Endothelial cell of umbilical vein (primary cell): ENCODE measurements at regions of chr15 and their contacts with region 1.

Region 1: GRCh38 chr15:52256366-52256765 is 39.2 kb downstream of the MYO5C start:
- DNase-seq: peak; percentile 90
- H3K4me3 ChIP-seq: no peak overlapping the region
- H3K27ac ChIP-seq: no peak overlapping the region
- H3K4me1 ChIP-seq: peaks cover 33% of the 10 kb centered on the region
- H3K27me3 ChIP-seq: no peaks in the 10 kb centered on the region
- CTCF ChIP-seq: peak; percentile 69
- POLR2A ChIP-seq: no peak

Region 2: GRCh38 chr15:52071546-52071945 is 184.8 kb before region 1 on chr15:
- CTCF ChIA-PET with region 1: no interaction called
- POLR2A ChIA-PET with region 1: no interaction called
- dilution Hi-C with region 1: no loop called
- intact Hi-C with region 1: no loop called
- DNase-seq: no peak
- H3K4me3 ChIP-seq: no peak overlapping the region
- H3K27ac ChIP-seq: no peak overlapping the region
- H3K4me1 ChIP-seq: peaks cover under 1% of the 10 kb centered on the region
- H3K27me3 ChIP-seq: no peaks in the 10 kb centered on the region
- CTCF ChIP-seq: no peak
- POLR2A ChIP-seq: no peak

Region 3: GRCh38 chr15:52417521-52417920 is 161.2 kb after region 1 on chr15:
- CTCF ChIA-PET with region 1: no interaction called
- POLR2A ChIA-PET with region 1: no interaction called
- dilution Hi-C with region 1: no loop called
- intact Hi-C with region 1: loop called (anchors 5 kb)
- DNase-seq: peak; percentile 90
- H3K4me3 ChIP-seq: peak overlapping the region in 2 of 3 experiments; percentile 24 to 59
- H3K27ac ChIP-seq: peak overlapping the region; percentile 97
- H3K4me1 ChIP-seq: peaks cover 67% of the 10 kb centered on the region
- H3K27me3 ChIP-seq: no peaks in the 10 kb centered on the region
- CTCF ChIP-seq: no peak
- POLR2A ChIP-seq: peak; percentile 38

Region 4: GRCh38 chr15:52496776-52497470 is 240.6 kb after region 1 on chr15:
- CTCF ChIA-PET with region 1: no interaction called
- POLR2A ChIA-PET with region 1: no interaction called
- dilution Hi-C with region 1: no loop called
- intact Hi-C with region 1: loop called (anchors 10 kb)
- DNase-seq: peak; percentile 62
- H3K4me3 ChIP-seq: no peak overlapping the region
- H3K27ac ChIP-seq: peak overlapping the region; percentile 27
- H3K4me1 ChIP-seq: peaks cover 59% of the 10 kb centered on the region
- H3K27me3 ChIP-seq: no peaks in the 10 kb centered on the region
- CTCF ChIP-seq: no peak
- POLR2A ChIP-seq: no peak

Region 5: GRCh38 chr15:52568601-52569256 is 312.4 kb after region 1 on chr15 and contains the start of gene ARPP19:
- CTCF ChIA-PET with region 1: interaction called, 3 read pairs
- POLR2A ChIA-PET with region 1: no interaction called
- dilution Hi-C with region 1: no loop called
- intact Hi-C with region 1: loop called (anchors 1 kb)
- DNase-seq: peak; percentile 86
- H3K4me3 ChIP-seq: peak within 1 kb of the TSS; percentile 45 to 79 (median 75)
- H3K27ac ChIP-seq: peak within 1 kb of the TSS; percentile 80
- H3K4me1 ChIP-seq: peaks cover 24% of the 10 kb centered on the region
- H3K27me3 ChIP-seq: no peaks in the 10 kb centered on the region
- CTCF ChIP-seq: no peak
- POLR2A ChIP-seq: peak; percentile 88
- total RNA-seq, gene ARPP19: 176 and 191 TPM in 2 replicates

Region 6: GRCh38 chr15:52730173-52730572 is 473.8 kb after region 1 on chr15:
- CTCF ChIA-PET with region 1: interaction called, 133 read pairs
- POLR2A ChIA-PET with region 1: no interaction called
- dilution Hi-C with region 1: no loop called
- intact Hi-C with region 1: loop called (anchors 1 kb)
- DNase-seq: peak; percentile 92
- H3K4me3 ChIP-seq: no peak overlapping the region
- H3K27ac ChIP-seq: peak overlapping the region; percentile 73
- H3K4me1 ChIP-seq: peaks cover 38% of the 10 kb centered on the region
- H3K27me3 ChIP-seq: no peaks in the 10 kb centered on the region
- CTCF ChIP-seq: no peak
- POLR2A ChIP-seq: no peak